Posterior cingulate gyrus (tissue), 11 donors: ENCODE measurements at regions of chr12 and their contacts with region 1.

Region 1: GRCh38 chr12:2812290-2813213 is at the start of gene ITFG2:
- DNase-seq: peak; percentile 95 to 100 (median 98)

Region 2: GRCh38 chr12:2795291-2796186 is 17.0 kb before region 1 on chr12:
- intact Hi-C with region 1: loop called (anchors 1 kb)
- DNase-seq: peak; percentile 75 to 98 (median 82)

Region 3: GRCh38 chr12:2877047-2877952 is 64.7 kb after region 1 on chr12 and contains the starts of genes FOXM1 and RHNO1:
- intact Hi-C with region 1: loop called (anchors 10 kb)
- DNase-seq: peak; percentile 91 to 99 (median 96)